Ascending aorta (tissue), 2 donors: ENCODE measurements at regions of chr9 and their contacts with region 1.

Region 1: GRCh38 chr9:2497666-2498400 is 123.8 kb upstream of the VLDLR start:
- DNase-seq: no peak
- H3K4me3 ChIP-seq: no peak overlapping the region
- H3K27ac ChIP-seq: no peak overlapping the region
- H3K4me1 ChIP-seq: no peaks in the 10 kb centered on the region
- H3K27me3 ChIP-seq: no peaks in the 10 kb centered on the region
- CTCF ChIP-seq: no peak

Region 2: GRCh38 chr9:2480255-2480837 is 17.5 kb before region 1 on chr9:
- intact Hi-C with region 1: loop called (anchors 1 kb)
- DNase-seq: no peak
- H3K4me3 ChIP-seq: no peak overlapping the region
- H3K27ac ChIP-seq: no peak overlapping the region
- H3K4me1 ChIP-seq: no peaks in the 10 kb centered on the region
- H3K27me3 ChIP-seq: no peaks in the 10 kb centered on the region
- CTCF ChIP-seq: no peak